AG04449 (cell line): ENCODE measurements at regions of chr19 and their contacts with region 1.

Region 1: GRCh38 chr19:7340959-7341837 is 7.5 kb upstream of the ARHGEF18 start:
- DNase-seq: no peak
- H3K4me3 ChIP-seq: no peak overlapping the region
- CTCF ChIP-seq: peak; percentile 85

Region 2: GRCh38 chr19:7098701-7099596 is 242.2 kb before region 1 on chr19:
- CTCF ChIA-PET with region 1: interaction called, 167 read pairs
- POLR2A ChIA-PET with region 1: no interaction called
- DNase-seq: peak; percentile 28
- H3K4me3 ChIP-seq: peak overlapping the region; percentile 81
- CTCF ChIP-seq: no peak

Region 3: GRCh38 chr19:7125221-7125620 is 216.0 kb before region 1 on chr19:
- CTCF ChIA-PET with region 1: interaction called, 12 read pairs
- POLR2A ChIA-PET with region 1: no interaction called
- DNase-seq: no peak
- H3K4me3 ChIP-seq: no peak overlapping the region
- CTCF ChIP-seq: no peak

Region 4: GRCh38 chr19:7137120-7137519 is 204.1 kb before region 1 on chr19:
- CTCF ChIA-PET with region 1: interaction called, 16 read pairs
- POLR2A ChIA-PET with region 1: no interaction called
- DNase-seq: no peak
- H3K4me3 ChIP-seq: no peak overlapping the region
- CTCF ChIP-seq: no peak

Region 5: DNA sequence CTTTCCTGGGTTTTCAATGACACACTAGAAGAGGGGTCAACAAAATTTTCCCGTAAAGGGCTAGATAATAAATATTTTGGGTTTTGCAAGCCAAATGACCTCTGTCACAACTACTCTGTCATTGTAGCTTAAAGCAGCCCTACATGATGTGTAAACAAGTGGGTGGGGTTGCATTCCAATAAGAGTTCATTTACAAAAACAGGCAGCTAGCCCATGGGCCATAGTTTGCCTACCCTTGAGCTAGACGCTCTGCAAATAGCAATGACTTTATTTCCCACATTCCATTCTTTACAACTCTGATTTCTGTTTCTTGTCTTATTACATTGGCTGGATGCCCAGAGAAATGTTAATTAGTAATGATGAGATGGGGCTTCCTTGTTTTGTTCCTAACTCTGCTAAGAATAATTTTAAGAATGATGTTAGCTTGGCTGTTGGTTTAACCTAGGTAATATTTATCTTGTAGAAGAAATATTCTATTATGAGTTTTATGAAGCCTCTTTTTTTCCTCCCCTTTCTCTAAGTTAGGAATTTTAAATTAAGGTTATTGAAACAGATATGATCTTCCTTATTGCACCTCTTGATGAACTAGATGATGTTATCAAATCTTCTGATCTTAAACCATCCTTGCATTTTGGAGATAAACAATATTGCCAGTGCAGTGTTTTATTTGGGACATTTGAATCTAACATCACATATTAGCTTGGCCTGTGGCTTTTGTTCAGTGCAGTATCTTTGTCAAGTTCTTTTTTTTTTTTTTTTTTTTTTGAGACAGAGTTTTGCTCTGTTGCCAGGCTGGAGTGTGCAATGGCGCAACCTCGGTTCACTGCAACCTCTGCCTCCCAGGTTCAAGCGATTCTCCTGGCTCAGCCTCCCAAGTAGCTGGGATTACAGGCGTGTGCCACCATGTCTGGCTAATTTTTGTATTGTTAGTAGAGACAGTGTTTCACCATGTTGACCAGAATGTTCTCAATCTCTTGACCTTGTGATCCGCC is 195.4 kb before region 1 on chr19:
- CTCF ChIA-PET with region 1: interaction called, 62 read pairs
- POLR2A ChIA-PET with region 1: no interaction called
- DNase-seq: no peak
- H3K4me3 ChIP-seq: no peak overlapping the region
- CTCF ChIP-seq: no peak

Region 6: GRCh38 chr19:7152568-7152967 is 188.6 kb before region 1 on chr19:
- CTCF ChIA-PET with region 1: interaction called, 62 read pairs
- POLR2A ChIA-PET with region 1: no interaction called
- DNase-seq: no peak
- H3K4me3 ChIP-seq: no peak overlapping the region
- CTCF ChIP-seq: no peak

Region 7: DNA sequence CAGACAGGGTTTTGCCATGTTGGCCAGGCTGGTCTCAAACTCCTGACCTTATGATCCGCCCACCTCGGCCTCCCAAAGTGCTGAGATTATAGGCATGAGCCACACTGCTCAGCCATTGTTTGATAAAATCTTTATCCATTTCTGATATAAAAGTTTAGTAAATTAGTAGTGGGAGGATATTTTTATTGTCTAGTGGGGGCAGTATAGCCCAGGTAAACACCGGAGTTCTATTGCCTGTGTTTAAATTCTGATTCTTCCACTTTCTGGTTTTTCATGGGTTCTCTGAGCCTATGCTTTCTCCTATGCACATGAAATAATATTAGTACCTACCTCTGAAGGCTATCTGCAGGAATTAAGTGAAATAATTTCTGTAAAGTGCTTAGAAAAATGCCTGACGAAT is 12.6 kb before region 1 on chr19:
- CTCF ChIA-PET with region 1: interaction called, 15 read pairs
- POLR2A ChIA-PET with region 1: no interaction called
- DNase-seq: no peak
- H3K4me3 ChIP-seq: no peak overlapping the region
- CTCF ChIP-seq: no peak

Region 8: DNA sequence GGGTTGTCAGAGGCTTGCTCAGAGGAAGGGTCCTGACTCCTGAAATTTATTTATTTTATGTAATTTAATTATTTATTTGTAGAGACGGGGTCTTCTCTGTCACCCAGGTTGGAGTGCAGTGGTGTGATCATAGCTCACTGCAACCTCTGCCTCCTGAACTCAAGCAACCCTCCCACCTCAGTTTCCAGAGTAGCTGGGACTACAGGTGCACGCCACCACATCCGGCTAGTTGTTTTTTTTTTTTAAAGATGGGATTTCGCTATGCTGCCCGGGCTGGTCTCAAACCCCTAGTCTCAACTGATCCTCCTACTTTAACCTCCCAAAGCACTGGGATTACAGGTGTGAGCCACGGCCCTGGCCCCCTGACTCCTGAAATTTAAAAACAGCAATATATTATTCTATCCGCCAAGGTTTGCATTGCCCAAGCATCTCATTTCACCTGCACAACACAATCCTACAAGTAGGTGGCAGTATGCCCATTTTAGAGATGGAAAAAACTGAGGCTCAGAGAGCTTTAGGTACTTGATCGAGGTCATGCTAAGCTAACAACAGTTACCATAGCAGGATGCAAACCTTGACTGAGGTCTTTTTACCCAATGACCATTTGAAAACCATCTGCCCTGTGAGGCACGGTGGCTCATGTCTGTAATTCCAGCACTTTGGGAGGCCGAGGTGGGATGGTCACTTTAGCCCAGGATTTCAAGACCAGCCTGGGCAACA is 25.7 kb after region 1 on chr19:
- CTCF ChIA-PET with region 1: no interaction called
- POLR2A ChIA-PET with region 1: no interaction called
- DNase-seq: no peak
- H3K4me3 ChIP-seq: no peak overlapping the region
- CTCF ChIP-seq: no peak